ENCODE measurements at regions of chr7 and their contacts with region 1.

Region 1: DNA sequence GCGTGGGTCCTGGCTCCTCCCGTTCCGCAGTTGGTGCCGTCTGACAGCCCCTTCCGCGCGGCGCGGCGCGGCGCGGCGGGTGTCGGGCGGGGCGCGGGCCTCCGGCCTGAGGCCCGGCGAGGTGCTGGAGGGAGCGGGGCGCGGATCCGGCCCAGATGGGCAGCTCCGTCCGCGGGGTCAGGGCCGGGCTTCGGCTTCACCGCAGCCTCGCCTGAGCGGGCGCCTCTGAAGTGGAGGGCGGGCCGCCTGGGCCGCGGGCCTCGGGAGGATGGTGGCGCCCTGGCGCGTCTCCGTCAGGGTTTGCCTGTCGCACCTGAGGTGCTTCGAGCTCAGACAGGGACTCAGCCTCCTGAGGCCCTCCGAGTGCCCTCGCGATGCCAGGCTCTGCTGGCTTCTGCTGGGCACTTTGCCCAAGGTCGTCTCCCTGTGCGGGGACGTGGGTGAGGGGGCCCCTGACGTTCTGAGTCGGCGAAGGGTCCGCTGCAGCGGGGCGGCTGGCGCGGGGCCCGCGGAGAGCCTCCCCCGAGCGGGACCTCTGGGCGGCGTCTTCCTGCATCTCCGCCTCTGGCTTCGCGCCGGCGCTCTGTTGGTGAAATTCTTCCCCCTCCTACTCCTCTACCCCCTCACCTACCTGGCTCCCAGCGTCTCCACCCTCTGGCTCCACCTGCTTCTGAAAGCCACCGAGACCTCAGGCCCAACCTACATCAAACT is 473 bp downstream of the ADCK2 start:
- DNase-seq: peak; percentile 54
- H3K4me3 Mint-ChIP-seq: peak overlapping the region; percentile 83
- H3K27ac Mint-ChIP-seq: peak overlapping the region; percentile 66
- H3K4me1 Mint-ChIP-seq: peaks cover 39% of the 10 kb centered on the region
- H3K27me3 Mint-ChIP-seq: no peaks in the 10 kb centered on the region

Region 2: GRCh38 chr7:140653319-140654108 is 19.7 kb before region 1 on chr7:
- CTCF ChIA-PET with region 1: interaction called, 3 read pairs
- intact Hi-C with region 1: loop called (anchors 1 kb)
- DNase-seq: peak; percentile 30
- H3K4me3 Mint-ChIP-seq: no peak overlapping the region
- H3K27ac Mint-ChIP-seq: no peak overlapping the region
- H3K4me1 Mint-ChIP-seq: peaks cover 15% of the 10 kb centered on the region
- H3K27me3 Mint-ChIP-seq: peaks cover 2% of the 10 kb centered on the region

Region 3: DNA sequence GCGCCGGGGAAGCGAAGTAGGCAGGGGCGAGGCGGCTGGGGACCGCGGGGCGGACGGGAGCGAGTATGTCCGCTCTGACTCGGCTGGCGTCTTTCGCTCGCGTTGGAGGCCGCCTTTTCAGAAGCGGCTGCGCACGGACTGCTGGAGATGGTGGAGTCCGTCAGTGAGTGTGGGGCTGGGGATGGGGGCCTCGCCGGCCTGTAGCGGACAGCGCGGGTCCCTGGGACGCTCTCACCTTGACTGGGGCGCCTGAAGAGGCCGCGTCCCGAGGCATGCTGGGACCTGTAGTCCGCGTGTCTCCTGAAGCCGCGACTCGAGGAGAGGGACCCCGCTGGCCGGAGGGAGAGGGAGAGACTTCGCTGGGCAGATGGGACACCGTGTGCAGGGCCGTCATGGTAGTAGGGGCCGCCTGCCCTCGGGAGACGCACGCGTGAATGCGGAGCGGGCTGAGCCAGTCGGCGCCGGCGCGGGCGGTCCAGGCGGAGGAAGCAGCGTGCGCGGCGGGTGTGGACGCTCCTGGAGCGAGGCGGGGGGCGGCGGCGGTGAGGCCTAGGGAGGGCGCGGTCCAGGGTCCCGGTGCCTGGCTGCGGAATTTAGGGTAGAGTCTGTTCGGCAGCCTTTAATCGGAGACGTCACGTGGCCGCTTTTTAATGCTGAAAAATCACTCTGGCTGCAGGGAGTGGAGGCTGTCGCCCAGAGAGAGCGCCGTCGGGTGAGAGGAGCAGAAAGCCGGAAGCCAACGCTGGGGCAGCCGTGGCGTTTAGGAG is 23.6 kb after region 1 on chr7 and contains the start of gene NDUFB2:
- CTCF ChIA-PET with region 1: interaction called, 3 read pairs
- intact Hi-C with region 1: loop called (anchors 1 kb)
- DNase-seq: peak; percentile 75
- H3K4me3 Mint-ChIP-seq: peak within 1 kb of the TSS; percentile 98
- H3K27ac Mint-ChIP-seq: peak within 1 kb of the TSS; percentile 99
- H3K4me1 Mint-ChIP-seq: peaks cover 34% of the 10 kb centered on the region
- H3K27me3 Mint-ChIP-seq: no peaks in the 10 kb centered on the region
- total RNA-seq, gene NDUFB2: 167 to 179 TPM

Region 4: DNA sequence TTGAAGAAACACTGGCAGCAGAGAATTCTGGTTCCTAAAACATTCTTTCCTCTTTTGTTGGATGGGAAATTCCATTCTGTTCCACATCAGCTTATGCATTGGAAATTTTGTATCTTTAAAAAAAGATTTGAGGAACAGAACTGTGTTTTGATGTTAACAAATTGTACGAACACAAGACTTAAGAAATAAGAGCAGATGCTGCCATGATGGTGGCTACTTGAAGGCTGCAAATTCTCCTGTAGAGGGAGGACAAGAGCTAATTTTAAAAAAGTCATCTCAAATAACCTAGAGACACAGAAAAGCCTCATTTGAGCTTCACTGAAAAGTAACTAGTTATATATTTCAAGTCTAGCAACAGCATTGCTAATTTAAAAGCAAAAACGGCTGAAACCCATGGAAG is 53.1 kb after region 1 on chr7:
- CTCF ChIA-PET with region 1: no interaction called
- intact Hi-C with region 1: loop called (anchors 2 kb)
- DNase-seq: no peak
- H3K4me3 Mint-ChIP-seq: no peak overlapping the region
- H3K27ac Mint-ChIP-seq: no peak overlapping the region
- H3K4me1 Mint-ChIP-seq: peaks cover 17% of the 10 kb centered on the region
- H3K27me3 Mint-ChIP-seq: no peaks in the 10 kb centered on the region

Region 5: DNA sequence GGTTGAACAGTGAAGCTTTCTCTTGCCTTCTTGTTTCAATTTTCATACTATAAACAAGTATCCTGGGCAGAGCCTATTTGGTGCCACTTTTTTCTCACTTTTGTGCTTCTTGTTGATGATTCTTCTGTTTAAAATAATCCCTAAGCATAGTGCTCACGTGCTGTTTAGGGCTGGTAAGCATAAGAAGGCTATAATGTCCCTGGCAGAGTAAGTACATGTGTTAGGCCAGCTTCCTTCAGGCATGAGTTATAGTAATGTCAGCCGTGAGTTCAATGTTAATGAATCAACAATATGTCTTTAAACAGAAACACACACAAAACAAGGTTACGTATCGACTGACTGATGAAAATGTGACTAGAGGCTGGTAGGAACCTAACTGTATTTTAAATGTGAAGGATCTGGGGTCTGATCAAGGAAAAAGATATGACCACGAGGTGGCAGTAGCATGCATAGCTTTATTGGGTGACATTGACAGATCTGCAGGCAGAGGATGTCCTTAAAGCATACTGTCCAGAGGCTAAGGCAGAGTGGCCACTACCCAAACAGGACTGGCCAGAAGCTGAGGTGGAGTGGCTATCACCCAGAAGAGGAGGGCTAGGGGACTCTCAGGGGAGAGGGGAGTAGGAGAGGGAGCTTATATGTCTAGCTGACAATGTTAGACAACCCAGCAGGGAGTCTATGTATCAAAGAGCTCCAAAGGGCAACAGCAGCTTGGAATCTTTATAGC is 137.8 kb after region 1 on chr7:
- CTCF ChIA-PET with region 1: no interaction called
- intact Hi-C with region 1: loop called (anchors 2 kb)
- DNase-seq: peak; percentile 78
- H3K4me3 Mint-ChIP-seq: no peak overlapping the region
- H3K27ac Mint-ChIP-seq: no peak overlapping the region
- H3K4me1 Mint-ChIP-seq: peaks cover 2% of the 10 kb centered on the region
- H3K27me3 Mint-ChIP-seq: no peaks in the 10 kb centered on the region

Region 6: DNA sequence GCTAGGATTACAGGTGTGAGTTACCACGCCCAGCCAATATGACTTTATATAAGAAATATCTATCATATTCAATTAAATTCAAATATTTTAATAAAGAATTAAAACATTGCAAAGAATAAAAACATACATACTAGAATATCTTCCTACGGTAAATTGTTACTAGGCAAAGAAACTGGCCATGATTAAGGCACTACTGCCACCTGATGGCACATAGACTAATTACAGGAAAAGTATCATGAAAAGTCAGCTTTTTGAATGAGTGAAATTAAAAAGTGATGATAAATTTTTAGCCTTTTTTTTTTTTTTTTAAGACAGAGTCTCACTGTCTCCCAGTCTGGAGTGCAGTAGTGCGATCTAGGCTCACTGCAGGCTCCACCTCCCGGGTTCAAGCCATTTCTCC is 310.6 kb after region 1 on chr7:
- CTCF ChIA-PET with region 1: interaction called, 11 read pairs
- intact Hi-C with region 1: loop called (anchors 1 kb)
- DNase-seq: peak; percentile 14
- H3K4me3 Mint-ChIP-seq: no peak overlapping the region
- H3K27ac Mint-ChIP-seq: no peak overlapping the region
- H3K4me1 Mint-ChIP-seq: no peaks in the 10 kb centered on the region
- H3K27me3 Mint-ChIP-seq: peaks cover 2% of the 10 kb centered on the region